ENCODE measurements at regions of chr2 and their contacts with region 1.

Region 1: GRCh38 chr2:111705711-111706336 is 178.2 kb downstream of the ANAPC1 start:
- DNase-seq: peak; percentile 86
- ATAC-seq: peak; percentile 80
- H3K4me3 ChIP-seq: no peak overlapping the region
- H3K27ac ChIP-seq: no peak overlapping the region
- H3K4me1 ChIP-seq: peaks cover 47 to 54% of the 10 kb centered on the region in 2 experiments
- H3K27me3 ChIP-seq: peaks cover 39% of the 10 kb centered on the region
- CTCF ChIP-seq: no peak
- POLR2A ChIP-seq: no peak
- RAD21 ChIP-seq: no peak

Region 2: GRCh38 chr2:110818767-110819481 is 886.9 kb before region 1 on chr2:
- CTCF ChIA-PET with region 1: no interaction called
- POLR2A ChIA-PET with region 1: no interaction called
- RAD21 ChIA-PET with region 1: interaction called in 1 of 2 experiments, 3 read pairs
- intact Hi-C with region 1: loop called (anchors 10 kb)
- DNase-seq: no peak
- ATAC-seq: peak; percentile 54; the same call in 1 of the 2 replicates
- H3K4me3 ChIP-seq: no peak overlapping the region
- H3K27ac ChIP-seq: no peak overlapping the region
- H3K4me1 ChIP-seq: no peaks in the 10 kb centered on the region
- H3K27me3 ChIP-seq: no peaks in the 10 kb centered on the region
- CTCF ChIP-seq: 0 out of 6 replicates have a peak, but pooled peaks of 1 of the 3 experiments have one; percentile 21
- POLR2A ChIP-seq: no peak
- RAD21 ChIP-seq: no peak

Measured in HCT116 (cell line).